ENCODE measurements at regions of chr9 and their contacts with region 1.

Region 1: GRCh38 chr9:114587385-114588202 is at the start of gene ATP6V1G1:
- DNase-seq: peak; percentile 99
- ATAC-seq: peak; percentile 91 to 93
- H3K4me3 ChIP-seq: peak within 1 kb of the TSS; percentile 73 to 87 (median 80)
- H3K27ac ChIP-seq: peak within 1 kb of the TSS; percentile 88 to 92 (median 90)
- H3K4me1 ChIP-seq: peaks cover 40 to 41% of the 10 kb centered on the region in 2 donors
- H3K27me3 ChIP-seq: no peaks in the 10 kb centered on the region
- CTCF ChIP-seq: peak in 2 of 5 experiments; percentile 35 to 40
- POLR2A ChIP-seq: peak; percentile 89 to 91
- total RNA-seq, gene ATP6V1G1: 105 to 191 (median 176) TPM

Region 2: GRCh38 chr9:113484258-113484730 is 1103.3 kb before region 1 on chr9:
- in situ Hi-C with region 1: no loop called
- intact Hi-C with region 1: loop called (anchors 10 kb)
- DNase-seq: peak in 1 of 2 donors; percentile 44
- ATAC-seq: peak; percentile 23 to 37
- H3K4me3 ChIP-seq: no peak overlapping the region
- H3K27ac ChIP-seq: peak overlapping the region; percentile 70 to 79 (median 76)
- H3K4me1 ChIP-seq: peaks cover 37 to 40% of the 10 kb centered on the region in 2 donors
- H3K27me3 ChIP-seq: no peaks in the 10 kb centered on the region
- CTCF ChIP-seq: no peak
- POLR2A ChIP-seq: no peak

Region 3: GRCh38 chr9:114603248-114603647 is 15.7 kb after region 1 on chr9:
- in situ Hi-C with region 1: no loop called
- intact Hi-C with region 1: loop called (anchors 1 kb)
- DNase-seq: no peak
- ATAC-seq: no peak
- H3K4me3 ChIP-seq: no peak overlapping the region
- H3K27ac ChIP-seq: no peak overlapping the region
- H3K4me1 ChIP-seq: peaks cover 4 to 5% of the 10 kb centered on the region in 2 donors
- H3K27me3 ChIP-seq: no peaks in the 10 kb centered on the region
- CTCF ChIP-seq: no peak
- POLR2A ChIP-seq: no peak

Region 4: GRCh38 chr9:114611516-114612271 is 24.1 kb after region 1 on chr9:
- in situ Hi-C with region 1: no loop called
- intact Hi-C with region 1: loop called (anchors 1 kb)
- DNase-seq: peak; percentile 45 to 75
- ATAC-seq: peak; percentile 89
- H3K4me3 ChIP-seq: peak overlapping the region; percentile 63 to 89 (median 71)
- H3K27ac ChIP-seq: peak overlapping the region; percentile 75 to 94 (median 90)
- H3K4me1 ChIP-seq: peaks cover 7 to 9% of the 10 kb centered on the region in 2 donors
- H3K27me3 ChIP-seq: no peaks in the 10 kb centered on the region
- CTCF ChIP-seq: no peak
- POLR2A ChIP-seq: no peak

Region 5: DNA sequence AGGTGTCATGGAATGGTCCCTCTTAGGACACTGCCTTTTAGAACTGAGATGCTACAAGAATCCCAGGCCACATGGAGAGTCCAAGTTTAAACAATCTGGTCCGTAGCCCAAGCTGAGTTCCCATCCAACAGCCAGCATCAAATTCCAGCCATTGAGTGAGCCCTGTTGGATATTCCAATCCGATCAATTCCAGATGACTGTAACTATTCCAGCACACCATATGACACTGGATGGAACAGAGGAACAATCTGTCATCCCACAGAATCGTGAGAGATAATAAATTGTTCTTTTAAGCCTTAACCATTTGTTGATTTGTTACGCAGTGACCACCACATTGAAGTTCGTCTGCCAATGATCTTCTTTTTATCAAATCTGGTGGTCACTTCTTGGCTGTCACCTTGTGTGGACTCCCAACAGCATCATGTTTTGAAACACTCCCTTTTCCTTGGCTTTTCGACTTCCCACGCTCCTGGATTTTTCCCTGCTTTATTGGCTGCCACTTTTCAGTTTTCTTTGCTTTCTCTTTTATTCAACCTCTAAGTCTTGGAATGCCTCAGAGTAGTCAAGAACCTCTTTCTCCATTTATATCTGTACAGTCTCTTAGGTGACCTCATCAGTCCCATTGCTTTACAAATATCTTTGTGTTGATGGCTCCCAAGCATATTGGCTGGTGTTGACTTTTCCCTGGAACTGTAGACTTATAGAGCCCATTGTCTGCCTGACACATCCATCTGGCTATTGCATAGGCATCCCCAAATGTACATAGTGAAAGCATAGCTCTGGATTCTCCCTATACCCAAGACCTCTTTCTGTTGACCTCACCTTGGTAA is 172.1 kb after region 1 on chr9:
- in situ Hi-C with region 1: no loop called
- intact Hi-C with region 1: no loop called
- DNase-seq: no peak
- ATAC-seq: no peak
- H3K4me3 ChIP-seq: no peak overlapping the region
- H3K27ac ChIP-seq: no peak overlapping the region
- H3K4me1 ChIP-seq: no peaks in the 10 kb centered on the region
- H3K27me3 ChIP-seq: no peaks in the 10 kb centered on the region
- CTCF ChIP-seq: no peak
- POLR2A ChIP-seq: no peak

Measured in gastrocnemius medialis (tissue), 4 donors.